RWPE1 (cell line): ENCODE measurements at regions of chr5 and their contacts with region 1.

Region 1: DNA sequence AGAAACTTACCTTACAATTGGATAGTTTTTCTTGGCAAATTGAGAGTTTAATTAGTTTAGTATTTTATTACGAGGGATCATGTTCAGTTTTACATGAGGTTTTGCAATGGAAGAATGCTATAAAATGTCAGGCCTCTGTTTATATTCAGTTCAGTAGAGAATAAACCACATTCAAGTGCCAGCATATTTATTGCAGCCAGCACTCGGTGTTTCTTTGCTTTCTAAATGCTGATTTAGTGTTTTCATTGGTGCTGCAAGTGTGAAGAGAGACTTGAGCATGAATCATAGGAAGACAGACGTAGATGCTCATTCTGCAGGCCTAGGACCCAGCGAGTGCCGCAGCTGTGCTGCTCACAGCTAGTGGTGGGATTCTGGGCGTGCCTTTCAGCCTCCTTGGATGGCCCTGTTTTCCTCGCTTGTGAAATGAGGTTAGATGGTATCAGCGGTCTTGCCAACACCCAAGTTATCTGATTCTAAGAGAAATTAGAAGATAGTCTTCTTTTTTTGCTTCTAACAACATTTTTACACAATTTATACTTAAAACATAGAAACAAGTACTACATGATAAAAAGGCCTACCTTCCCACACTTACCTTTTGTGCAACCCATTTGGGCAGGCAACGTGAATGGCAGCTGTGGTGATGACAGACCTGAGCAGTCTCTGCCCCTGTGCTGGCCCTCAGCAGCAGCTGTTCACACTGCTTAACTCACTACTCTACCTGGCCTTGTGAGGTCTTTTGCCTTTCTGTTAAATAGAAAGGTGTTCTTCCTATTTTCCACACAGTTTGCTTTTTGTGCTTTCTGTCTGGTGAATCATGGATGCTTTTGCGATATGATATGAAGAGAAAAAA is 26.8 kb upstream of the TNFAIP8 start:
- DNase-seq: no peak
- H3K27ac ChIP-seq: 0 out of 2 replicates have a peak overlapping the region, but pooled peaks have one; percentile 17
- CTCF ChIP-seq: no peak

Region 2: GRCh38 chr5:119267958-119268386 is 61.0 kb before region 1 on chr5:
- CTCF ChIA-PET with region 1: interaction called, 5 read pairs
- POLR2A ChIA-PET with region 1: interaction called, 17 read pairs
- DNase-seq: peak; percentile 91
- H3K27ac ChIP-seq: peak overlapping the region; percentile 89
- CTCF ChIP-seq: peak; percentile 60; the same call in 1 of the 2 replicates

Region 3: GRCh38 chr5:119346396-119346795 is 17.4 kb after region 1 on chr5:
- CTCF ChIA-PET with region 1: interaction called, 10 read pairs
- POLR2A ChIA-PET with region 1: interaction called, 4 read pairs
- DNase-seq: no peak
- H3K27ac ChIP-seq: no peak overlapping the region
- CTCF ChIP-seq: no peak